ENCODE measurements at regions of chr16 and their contacts with region 1.

Region 1: DNA sequence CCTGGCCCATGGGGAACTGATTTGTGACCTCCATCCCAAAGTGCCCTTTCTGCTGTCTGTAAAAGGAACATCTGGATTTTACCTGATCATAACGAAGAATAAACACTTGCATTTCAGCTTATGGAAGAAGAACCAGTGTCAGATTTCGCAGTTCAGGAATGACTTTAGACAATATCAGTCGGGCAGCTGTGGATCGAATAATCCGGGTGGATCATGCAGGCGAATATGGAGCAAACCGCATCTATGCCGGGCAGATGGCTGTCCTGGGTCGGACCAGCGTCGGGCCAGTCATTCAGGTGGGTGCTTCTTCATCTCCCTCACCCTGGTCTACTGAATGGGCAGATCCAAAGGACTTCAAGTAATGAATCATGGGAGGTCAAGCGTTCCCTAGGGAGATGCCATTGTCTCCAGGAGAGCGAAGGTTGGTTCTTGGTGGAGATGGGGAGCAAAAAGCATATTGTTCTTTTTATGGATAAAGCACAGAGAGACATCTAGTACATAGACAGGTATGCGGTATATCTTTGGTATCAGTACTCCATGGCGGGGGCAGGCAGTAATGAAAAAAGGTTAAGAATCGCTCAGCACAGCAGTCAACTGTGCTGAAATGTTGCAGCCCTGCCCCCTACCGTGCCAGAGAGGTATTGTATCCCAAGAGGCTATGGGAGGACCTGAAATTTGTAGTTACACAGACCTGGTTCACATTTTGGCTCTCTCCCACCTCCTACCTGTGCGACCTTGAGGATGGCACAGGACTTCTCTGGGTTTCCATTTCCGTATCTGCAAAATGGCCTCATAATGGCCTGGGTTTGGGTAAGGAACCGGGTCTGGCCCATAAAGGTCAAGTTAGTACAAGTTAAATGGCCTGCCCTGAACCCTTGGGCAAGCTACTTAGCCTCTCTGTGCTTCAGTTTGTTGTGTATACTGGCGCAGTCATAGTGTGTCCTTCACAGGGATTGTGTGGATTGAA is 4.7 kb downstream of the COQ7 start:
- DNase-seq: no peak
- H3K4me3 ChIP-seq: no peak overlapping the region
- H3K27ac ChIP-seq: no peak overlapping the region
- H3K4me1 ChIP-seq: peaks cover 5 to 19% (median 13%) of the 10 kb centered on the region in 3 donors
- H3K27me3 ChIP-seq: no peaks in the 10 kb centered on the region
- CTCF ChIP-seq: peak in 5 of 6 experiments; percentile 75 to 86 (median 76)
- POLR2A ChIP-seq: no peak

Region 2: DNA sequence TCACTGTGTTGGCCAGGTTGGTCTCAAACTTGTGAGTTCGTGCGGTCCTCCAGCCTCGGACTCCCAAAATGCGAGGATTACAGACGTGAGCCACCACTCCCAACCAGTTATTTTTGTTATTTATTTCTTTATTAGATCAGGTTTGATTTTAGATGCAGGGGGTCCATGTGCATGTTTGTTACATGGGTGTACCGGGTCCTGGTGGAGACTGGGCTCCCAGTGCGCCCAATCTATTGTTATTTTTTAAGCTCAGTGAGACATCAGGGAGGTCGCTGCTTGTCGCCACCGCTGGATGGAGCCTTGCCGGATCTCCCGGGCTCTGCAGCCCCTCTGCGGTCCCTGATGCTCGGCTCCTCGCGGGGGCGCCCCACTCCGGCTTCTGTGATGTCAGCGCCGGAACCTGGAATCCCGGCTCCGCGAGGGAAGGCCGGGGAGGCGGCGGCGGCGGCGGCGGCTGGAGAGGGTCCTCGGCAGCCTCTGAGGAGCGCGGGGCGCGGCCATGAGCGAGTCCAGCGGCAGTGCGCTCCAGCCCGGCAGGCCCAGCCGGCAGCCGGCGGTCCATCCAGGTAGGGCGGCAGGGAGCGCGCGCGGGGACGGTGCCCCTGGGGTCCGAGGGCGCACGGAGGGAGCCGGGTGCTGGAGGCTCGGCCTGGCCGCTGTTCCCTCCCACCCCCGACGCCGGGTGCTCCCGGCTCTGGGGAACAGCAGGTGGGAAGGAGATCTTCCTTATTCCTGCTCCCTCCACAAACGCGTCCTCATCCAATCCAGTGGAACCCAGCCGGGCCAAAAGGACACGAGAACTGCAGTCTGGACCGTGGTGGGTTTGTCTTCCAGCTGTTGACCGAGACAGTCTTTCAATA is 88.3 kb before region 1 on chr16 and contains the start of gene TMC7:
- intact Hi-C with region 1: loop called (anchors 5 kb)
- DNase-seq: no peak
- H3K4me3 ChIP-seq: peak within 1 kb of the TSS; percentile 41 to 72 (median 52)
- H3K27ac ChIP-seq: peak within 1 kb of the TSS; percentile 22 to 81 (median 66)
- H3K4me1 ChIP-seq: peaks cover 5 to 22% (median 9%) of the 10 kb centered on the region in 3 donors
- H3K27me3 ChIP-seq: peaks cover 0 to 19% (median 0%) of the 10 kb centered on the region in 4 donors
- CTCF ChIP-seq: peak; percentile 26 to 81 (median 67)
- POLR2A ChIP-seq: no peak
- total RNA-seq, gene TMC7: 0.15 to 0.66 (median 0.37) TPM

Measured in esophagus squamous epithelium (tissue), 5 donors.